Activated T-helper 2 cell treated with anti-CD3 and anti-CD28 coated beads, Interferon-gamma antibody, Interleukin-2, Interleukin-4, amounts not matched to agents 10 μg/mL and 5 μg/mL and 100 μg/mL, durations not matched to agents 14 hours and 24 hours and 36 hours (primary cell): ENCODE measurements at regions of chr1 and their contacts with region 1.

Region 1: GRCh38 chr1:65812065-65812464 is 19.4 kb downstream of the PDE4B start:
- DNase-seq: peak; percentile 72
- H3K4me3 Mint-ChIP-seq: no peak overlapping the region
- H3K27ac Mint-ChIP-seq: peak overlapping the region; percentile 38
- H3K4me1 Mint-ChIP-seq: peaks cover 35% of the 10 kb centered on the region
- H3K27me3 Mint-ChIP-seq: peaks cover 20% of the 10 kb centered on the region

Region 2: DNA sequence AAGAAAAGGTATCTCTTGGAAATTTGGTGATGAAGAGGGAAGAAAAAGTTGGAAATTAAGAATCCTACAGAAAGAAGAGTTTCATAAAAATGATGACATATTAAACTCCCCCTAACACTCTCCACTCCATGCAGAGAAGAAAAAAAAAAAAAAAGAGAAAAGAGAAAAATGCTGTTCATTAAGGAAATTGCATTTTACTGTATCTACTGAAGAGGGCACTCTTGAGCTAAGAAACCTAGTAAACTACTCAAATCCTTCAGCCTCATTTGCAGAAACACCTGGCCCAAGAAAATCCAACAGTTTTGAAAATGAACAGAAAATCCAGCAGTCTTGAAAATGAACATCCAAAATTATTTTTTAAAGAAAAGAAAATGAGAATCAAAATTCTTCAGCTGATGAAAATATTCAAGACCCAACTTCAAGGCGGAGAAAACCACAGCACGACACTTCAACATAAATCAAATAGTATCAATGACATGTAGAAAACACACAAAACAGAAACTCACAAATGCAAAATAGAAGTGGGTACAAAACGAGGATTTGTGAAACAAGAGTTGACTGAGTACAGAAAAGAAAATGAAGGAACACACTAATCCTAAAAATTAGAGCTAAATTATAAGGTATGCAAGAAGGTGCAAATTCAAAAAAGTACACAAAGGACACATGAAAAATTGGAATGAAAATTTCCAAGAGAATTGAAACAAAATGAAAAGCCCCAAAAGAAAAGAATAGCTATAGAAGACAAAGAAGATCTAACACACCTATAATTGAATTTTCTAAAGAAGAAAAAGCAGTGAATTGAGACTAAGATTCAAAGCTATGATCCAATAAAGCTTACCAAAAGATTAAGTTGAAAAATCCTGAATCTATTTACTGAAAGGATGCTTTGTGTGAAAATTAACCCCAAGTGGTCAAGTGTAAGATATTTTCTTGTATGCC is 575.9 kb before region 1 on chr1:
- intact Hi-C with region 1: loop called (anchors 10 kb)
- DNase-seq: no peak
- H3K4me3 Mint-ChIP-seq: no peak overlapping the region
- H3K27ac Mint-ChIP-seq: no peak overlapping the region
- H3K4me1 Mint-ChIP-seq: peaks cover 17% of the 10 kb centered on the region
- H3K27me3 Mint-ChIP-seq: peaks cover 17% of the 10 kb centered on the region

Region 3: DNA sequence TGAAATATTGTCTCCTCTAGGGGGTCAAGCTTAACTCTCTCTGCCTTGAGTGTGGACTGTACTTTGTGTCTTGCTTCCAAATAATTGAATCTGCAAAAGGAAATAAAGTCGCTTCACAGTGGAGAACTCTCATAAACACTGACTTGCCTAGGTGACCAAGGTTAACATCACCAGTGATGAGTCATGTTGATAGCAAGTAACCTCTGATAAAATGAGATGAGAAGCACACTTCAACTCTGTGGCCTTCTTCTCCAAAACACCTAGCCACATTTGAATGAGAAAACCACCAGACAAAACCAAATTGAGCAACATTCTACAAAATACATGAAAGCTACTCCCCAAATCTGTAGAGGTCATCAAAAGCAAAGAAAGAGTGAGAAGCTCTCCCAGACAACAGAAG is 18.2 kb after region 1 on chr1:
- intact Hi-C with region 1: loop called (anchors 1 kb)
- DNase-seq: peak; percentile 12
- H3K4me3 Mint-ChIP-seq: no peak overlapping the region
- H3K27ac Mint-ChIP-seq: no peak overlapping the region
- H3K4me1 Mint-ChIP-seq: peaks cover 23% of the 10 kb centered on the region
- H3K27me3 Mint-ChIP-seq: peaks cover 42% of the 10 kb centered on the region

Region 4: GRCh38 chr1:65952696-65953095 is 140.6 kb after region 1 on chr1:
- intact Hi-C with region 1: loop called (anchors 5 kb)
- DNase-seq: no peak
- H3K4me3 Mint-ChIP-seq: no peak overlapping the region
- H3K27ac Mint-ChIP-seq: no peak overlapping the region
- H3K4me1 Mint-ChIP-seq: peaks cover 7% of the 10 kb centered on the region
- H3K27me3 Mint-ChIP-seq: peaks cover 3% of the 10 kb centered on the region

Region 5: DNA sequence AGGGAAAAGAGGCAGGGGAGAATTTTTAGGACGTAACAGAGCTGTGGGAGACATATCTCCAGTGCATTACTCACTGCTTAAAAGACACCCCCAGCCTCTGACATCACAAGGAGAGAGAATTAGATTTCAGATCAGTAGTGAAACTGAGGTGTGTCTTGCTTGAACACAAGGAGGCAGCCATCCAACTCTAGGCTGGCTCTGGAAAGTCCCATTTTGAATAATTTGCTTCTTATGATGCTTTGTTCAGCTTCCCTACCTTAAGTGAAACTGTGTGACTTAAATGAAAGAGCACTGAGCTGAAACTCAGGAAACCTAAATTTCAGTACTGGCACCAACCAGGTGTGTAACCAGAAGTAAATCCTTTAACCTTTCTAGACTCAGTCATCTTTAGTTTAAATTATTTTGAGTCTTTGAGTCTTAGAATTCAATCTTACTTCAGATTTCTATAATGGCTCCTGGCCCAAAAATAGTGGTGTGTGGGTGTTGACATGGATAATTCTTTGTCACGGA is 470.3 kb after region 1 on chr1:
- intact Hi-C with region 1: loop called (anchors 5 kb)
- DNase-seq: peak; percentile 60
- H3K4me3 Mint-ChIP-seq: peak overlapping the region; percentile 35
- H3K27ac Mint-ChIP-seq: peak overlapping the region; percentile 86
- H3K4me1 Mint-ChIP-seq: peaks cover 69% of the 10 kb centered on the region
- H3K27me3 Mint-ChIP-seq: peaks cover 19% of the 10 kb centered on the region

Region 6: GRCh38 chr1:67174716-67175284 is 1362.7 kb after region 1 on chr1:
- intact Hi-C with region 1: loop called (anchors 5 kb)
- DNase-seq: no peak
- H3K4me3 Mint-ChIP-seq: no peak overlapping the region
- H3K27ac Mint-ChIP-seq: peak overlapping the region; percentile 63
- H3K4me1 Mint-ChIP-seq: peaks cover 49% of the 10 kb centered on the region
- H3K27me3 Mint-ChIP-seq: peaks cover 4% of the 10 kb centered on the region